Breast epithelium (tissue), 4 donors: ENCODE measurements at regions of chr10 and their contacts with region 1.

Region 1: DNA sequence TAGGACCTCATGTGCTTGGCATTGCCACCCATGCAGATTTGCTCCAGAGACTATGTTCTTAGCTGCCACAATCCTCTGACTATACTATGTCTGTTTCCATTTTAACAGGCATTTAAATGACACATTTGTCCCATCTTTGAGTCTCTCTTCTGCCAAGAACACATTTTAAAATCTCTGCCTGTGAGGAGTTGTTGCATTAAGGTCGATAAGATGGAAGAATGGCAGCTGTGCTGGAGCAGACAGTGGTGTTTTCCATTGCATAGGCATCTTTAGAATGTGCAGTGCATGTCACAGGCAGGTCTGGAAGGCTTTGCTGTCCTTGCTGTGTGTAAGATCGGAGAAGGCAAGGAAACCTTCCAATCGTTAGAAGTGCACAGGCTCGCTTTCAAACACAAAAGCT is 70.9 kb upstream of the CELF2 start:
- DNase-seq: no peak
- H3K4me3 ChIP-seq: no peak overlapping the region
- H3K27ac ChIP-seq: no peak overlapping the region
- H3K4me1 ChIP-seq: no peaks in the 10 kb centered on the region
- H3K27me3 ChIP-seq: no peaks in the 10 kb centered on the region
- CTCF ChIP-seq: no peak
- POLR2A ChIP-seq: no peak

Region 2: GRCh38 chr10:10911471-10911921 is 35.3 kb before region 1 on chr10:
- intact Hi-C with region 1: no loop called
- DNase-seq: peak; percentile 53 to 54
- H3K4me3 ChIP-seq: peak overlapping the region; percentile 17 to 62 (median 42)
- H3K27ac ChIP-seq: peak overlapping the region; percentile 62 to 83
- H3K4me1 ChIP-seq: no peaks in the 10 kb centered on the region
- H3K27me3 ChIP-seq: no peaks in the 10 kb centered on the region
- CTCF ChIP-seq: no peak
- POLR2A ChIP-seq: no peak

Region 3: GRCh38 chr10:11068861-11069633 is 122.2 kb after region 1 on chr10:
- intact Hi-C with region 1: loop called (anchors 5 kb)
- DNase-seq: no peak
- H3K4me3 ChIP-seq: no peak overlapping the region
- H3K27ac ChIP-seq: no peak overlapping the region
- H3K4me1 ChIP-seq: no peaks in the 10 kb centered on the region
- H3K27me3 ChIP-seq: no peaks in the 10 kb centered on the region
- CTCF ChIP-seq: no peak
- POLR2A ChIP-seq: no peak